Prostate gland (tissue), 2 donors: ENCODE measurements at regions of chr1 and their contacts with region 1.

Region 1: DNA sequence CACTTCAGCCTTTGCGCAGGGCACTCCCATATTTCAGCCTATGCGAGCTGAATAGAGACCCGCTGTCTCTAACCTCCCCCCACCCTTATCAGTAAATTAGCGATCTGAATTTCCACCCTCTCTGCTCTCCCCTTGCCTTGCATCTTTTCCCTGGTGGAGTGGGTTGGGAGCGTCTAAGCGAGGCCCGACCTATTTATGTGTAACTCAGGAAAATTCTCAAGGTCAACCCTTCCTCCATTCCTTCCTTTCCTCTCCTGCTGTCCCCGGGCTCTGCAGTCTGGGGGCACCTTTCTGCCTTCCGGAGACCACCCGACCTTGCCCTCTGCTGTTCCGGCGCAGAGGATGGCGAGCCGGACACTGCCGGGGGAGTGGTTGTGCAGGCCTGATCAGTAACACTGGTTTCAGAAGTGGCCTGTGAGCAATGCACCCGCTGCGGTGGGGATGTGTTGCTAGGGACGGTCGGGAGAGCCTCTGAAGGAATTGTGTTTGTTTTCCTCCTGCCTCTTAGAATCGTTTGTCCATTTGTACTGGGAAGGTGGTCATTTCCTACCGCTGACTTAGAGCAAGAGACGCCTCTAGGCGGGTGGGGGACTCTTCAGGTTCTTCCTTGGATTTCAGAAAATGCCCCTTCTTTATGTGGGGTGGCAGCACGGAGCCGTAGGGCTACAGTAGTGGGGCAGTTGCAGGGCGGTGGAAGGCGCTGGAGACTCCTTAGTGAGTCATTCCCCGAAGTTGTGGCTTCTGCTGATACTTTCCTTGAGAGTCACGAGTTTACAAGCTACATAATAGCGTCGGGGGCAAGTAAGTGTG is 513 bp downstream of the MGST3 start:
- DNase-seq: peak; percentile 53
- H3K4me3 ChIP-seq: peak overlapping the region; percentile 63 to 77
- H3K27ac ChIP-seq: peak overlapping the region; percentile 87 to 92
- H3K4me1 ChIP-seq: peaks cover 5% of the 10 kb centered on the region
- H3K27me3 ChIP-seq: no peaks in the 10 kb centered on the region
- CTCF ChIP-seq: peak in 1 of 4 experiments; percentile 1
- POLR2A ChIP-seq: no peak

Region 2: DNA sequence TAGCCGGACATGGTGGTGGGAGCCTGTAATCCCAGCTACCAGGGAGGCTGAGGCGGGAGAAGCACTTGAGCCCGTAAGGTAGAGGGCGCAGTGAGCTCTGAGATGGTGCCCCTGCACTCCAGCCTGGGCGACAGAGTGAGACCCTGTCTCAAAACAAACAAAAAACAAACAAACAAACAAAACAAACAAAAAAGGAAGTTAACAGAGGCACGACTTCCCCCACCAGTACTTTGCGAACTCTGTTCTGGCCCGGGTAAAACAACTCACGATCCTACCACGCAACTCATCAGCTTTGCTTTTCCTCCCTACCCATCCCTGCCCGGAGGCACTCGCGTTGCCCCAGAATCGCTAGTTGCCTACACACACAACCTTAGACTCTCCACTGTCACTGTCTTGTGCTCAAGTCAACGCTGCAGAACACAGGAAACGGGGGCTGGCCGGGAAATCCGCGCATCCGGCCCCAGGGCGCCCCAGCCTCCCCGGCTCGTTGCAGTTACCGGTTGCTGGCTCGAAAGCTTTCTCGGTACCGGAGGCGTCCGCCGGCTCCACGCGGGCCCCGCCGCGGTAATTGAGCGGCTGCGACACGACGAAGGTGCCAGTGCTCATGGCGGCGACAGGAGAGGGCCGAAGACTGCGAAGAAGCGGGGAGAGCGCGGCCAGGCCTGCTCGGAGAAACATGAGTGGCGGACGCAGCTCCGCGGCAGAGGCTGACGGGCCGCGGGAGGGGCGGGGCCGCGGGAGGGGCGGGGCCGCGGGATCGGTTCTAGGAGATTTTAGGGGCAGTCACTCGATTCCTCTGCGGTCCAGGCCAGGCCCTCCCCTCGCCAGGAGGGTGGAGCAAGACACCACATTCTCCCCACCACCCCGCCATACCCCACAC is 66.6 kb after region 1 on chr1 and contains the start of gene ALDH9A1:
- intact Hi-C with region 1: loop called (anchors 2 kb)
- DNase-seq: peak; percentile 80
- H3K4me3 ChIP-seq: peak within 1 kb of the TSS; percentile 71 to 92
- H3K27ac ChIP-seq: peak within 1 kb of the TSS; percentile 91 to 98
- H3K4me1 ChIP-seq: peaks cover 12% of the 10 kb centered on the region
- H3K27me3 ChIP-seq: no peaks in the 10 kb centered on the region
- CTCF ChIP-seq: peak in 3 of 4 experiments; percentile 31 to 43 (median 40)
- POLR2A ChIP-seq: peak; percentile 93
- total RNA-seq, gene ALDH9A1: 172 to 206 TPM